ENCODE measurements at regions of chr4 and their contacts with region 1.

Region 1: GRCh38 chr4:78945651-78946179 is 6.5 kb upstream of the PAQR3 start:
- DNase-seq: no peak
- H3K4me3 Mint-ChIP-seq: no peak overlapping the region
- H3K27ac Mint-ChIP-seq: no peak overlapping the region
- H3K4me1 Mint-ChIP-seq: peaks cover 26% of the 10 kb centered on the region
- H3K27me3 Mint-ChIP-seq: peaks cover 62% of the 10 kb centered on the region

Region 2: DNA sequence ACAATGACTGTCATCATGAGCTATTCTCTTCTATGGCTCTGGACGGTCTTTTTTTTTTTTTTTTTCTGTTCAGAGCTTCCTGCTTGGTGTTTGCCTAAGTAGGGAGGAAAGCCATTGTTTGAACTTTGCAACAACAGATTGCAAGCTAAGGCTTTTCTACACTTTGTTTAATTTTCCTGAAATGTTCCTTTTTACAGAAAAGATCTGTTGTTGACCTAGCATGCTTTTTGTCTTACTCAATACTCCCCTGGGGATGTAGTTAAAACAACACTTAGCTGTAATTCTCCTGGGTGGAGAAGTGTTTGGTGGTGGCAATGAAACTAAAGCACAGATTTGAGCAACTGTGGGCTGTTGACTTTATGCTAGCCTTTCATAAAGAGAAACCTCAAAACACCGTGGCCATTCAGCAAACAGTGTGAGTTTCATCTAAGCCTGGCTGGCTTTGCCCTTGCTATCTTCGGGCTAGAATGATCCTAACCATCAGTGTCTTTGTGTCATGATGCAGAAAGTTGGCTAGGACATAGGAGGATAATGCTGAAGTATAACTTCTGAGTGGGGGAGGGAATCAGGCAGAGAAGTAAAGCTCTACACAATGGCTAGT is 283.7 kb before region 1 on chr4:
- intact Hi-C with region 1: loop called (anchors 1 kb)
- DNase-seq: no peak
- H3K4me3 Mint-ChIP-seq: no peak overlapping the region
- H3K27ac Mint-ChIP-seq: no peak overlapping the region
- H3K4me1 Mint-ChIP-seq: peaks cover 50% of the 10 kb centered on the region
- H3K27me3 Mint-ChIP-seq: peaks cover 19% of the 10 kb centered on the region

Region 3: DNA sequence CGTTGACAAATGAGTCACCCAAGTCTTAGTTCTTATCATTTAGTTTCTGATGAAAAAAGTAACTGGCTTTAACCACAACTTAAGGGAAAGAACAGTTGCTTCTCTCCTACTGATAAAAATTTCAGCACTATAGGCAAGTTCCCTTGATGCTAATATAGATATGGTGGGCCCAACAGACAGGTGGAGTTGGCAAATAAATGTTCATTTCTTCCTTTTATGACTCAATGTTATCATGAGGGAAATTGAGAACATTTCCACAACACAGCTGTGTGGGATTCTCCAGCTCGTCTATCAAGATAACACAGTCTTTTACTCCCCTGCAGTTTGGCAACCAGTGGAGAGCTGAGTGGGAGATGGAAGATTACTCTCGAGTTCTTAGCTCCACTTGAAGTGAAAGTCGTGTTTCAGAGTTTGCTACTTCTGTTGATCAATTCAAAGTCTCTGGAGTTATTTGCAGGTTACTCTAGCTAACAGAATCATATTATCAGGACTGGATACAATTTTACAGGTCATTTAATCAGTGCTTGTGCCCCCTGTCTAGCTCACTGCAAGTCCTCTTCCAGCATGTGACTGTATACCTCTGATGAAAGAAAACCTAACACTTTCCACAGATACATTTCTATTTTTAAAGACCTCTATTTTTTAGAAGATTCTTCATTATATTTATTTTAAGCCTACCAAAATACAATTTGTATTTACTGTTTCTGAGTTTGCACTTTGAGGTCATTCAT is 732.9 kb after region 1 on chr4:
- intact Hi-C with region 1: loop called (anchors 5 kb)
- DNase-seq: no peak
- H3K4me3 Mint-ChIP-seq: no peak overlapping the region
- H3K27ac Mint-ChIP-seq: peak overlapping the region; percentile 14
- H3K4me1 Mint-ChIP-seq: peaks cover 29% of the 10 kb centered on the region
- H3K27me3 Mint-ChIP-seq: peaks cover 6% of the 10 kb centered on the region